Activated CD4-positive, alpha-beta T cell treated with anti-CD3 and anti-CD28 coated beads for 36 hours (primary cell): ENCODE measurements at regions of chr17 and their contacts with region 1.

Region 1: DNA sequence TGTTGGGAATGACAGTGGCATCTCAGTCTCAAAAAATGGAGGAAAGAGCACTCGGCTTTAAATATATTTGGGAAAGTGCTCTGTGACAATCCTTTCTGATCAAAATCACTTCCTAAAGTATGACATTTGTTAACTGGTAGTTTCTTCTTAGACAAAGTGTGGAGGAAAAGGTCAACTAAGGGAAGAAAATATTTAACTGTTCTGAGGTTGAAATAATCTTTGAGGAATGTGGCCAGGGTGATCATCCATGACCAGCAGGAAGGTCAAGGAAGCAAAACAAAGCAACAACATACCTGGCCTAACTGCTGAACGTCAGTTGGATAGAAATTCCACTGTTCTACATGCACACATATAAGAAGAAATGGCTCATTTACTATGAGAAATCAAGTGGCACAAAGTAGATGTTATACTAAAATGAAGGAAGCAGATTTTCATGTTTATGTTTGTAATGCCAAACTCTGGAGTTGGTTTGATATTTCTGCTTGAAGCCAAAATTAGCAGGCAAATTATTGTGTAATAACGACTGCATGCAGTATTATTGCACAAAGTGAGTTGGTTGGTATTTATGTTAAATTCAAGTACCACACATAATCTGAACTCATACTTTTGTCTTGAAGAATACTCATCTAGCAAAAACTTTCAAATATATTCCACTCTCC is 87.3 kb upstream of the CORO6 start:
- DNase-seq: no peak
- ATAC-seq: no peak
- H3K4me3 Mint-ChIP-seq: no peak overlapping the region
- H3K27ac Mint-ChIP-seq: no peak overlapping the region
- H3K4me1 Mint-ChIP-seq: peaks cover 69% of the 10 kb centered on the region
- H3K27me3 Mint-ChIP-seq: no peaks in the 10 kb centered on the region

Region 2: DNA sequence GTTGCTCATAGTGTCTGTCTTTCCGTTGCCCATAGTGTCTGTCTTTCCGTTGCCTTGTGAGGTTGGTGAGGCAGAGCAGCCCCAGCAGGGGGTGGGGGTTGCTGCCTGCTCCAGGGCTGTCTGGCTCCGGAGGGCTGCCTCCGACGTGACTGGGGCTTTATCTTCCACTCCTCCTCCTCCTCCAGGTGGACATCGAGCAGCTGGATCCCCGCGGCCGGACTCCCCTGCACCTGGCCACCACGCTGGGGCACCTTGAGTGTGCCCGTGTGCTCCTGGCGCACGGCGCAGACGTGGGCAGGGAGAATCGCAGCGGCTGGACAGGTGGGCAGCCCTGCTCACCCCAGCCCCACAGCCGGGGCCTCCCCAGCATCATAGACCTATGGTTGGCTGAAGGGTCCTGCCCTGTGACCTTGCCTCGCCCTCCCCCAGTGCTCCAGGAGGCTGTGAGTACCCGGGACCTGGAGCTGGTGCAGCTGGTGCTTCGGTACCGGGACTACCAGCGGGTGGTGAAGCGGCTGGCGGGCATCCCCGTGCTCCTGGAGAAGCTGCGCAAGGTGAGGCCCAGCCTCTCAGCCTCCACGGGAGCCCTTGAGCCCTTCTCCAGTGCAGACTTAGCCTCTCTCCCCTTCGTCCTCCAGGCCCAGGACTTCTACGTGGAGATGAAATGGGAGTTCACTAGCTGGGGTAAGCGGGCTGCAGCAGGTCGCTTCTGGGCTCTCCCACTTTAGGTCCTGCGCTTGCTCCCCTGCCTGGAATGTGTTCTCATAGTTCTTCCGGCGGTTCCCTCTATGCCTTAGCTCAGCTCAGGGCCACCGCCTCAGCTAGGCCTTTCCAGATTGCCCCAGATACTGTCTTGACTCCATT is 102.2 kb before region 1 on chr17:
- CTCF ChIA-PET with region 1: no interaction called
- POLR2A ChIA-PET with region 1: no interaction called
- intact Hi-C with region 1: no loop called
- DNase-seq: no peak
- ATAC-seq: no peak
- H3K4me3 Mint-ChIP-seq: no peak overlapping the region
- H3K27ac Mint-ChIP-seq: no peak overlapping the region
- H3K4me1 Mint-ChIP-seq: no peaks in the 10 kb centered on the region
- H3K27me3 Mint-ChIP-seq: no peaks in the 10 kb centered on the region

Region 3: GRCh38 chr17:29630630-29631193 is 79.3 kb before region 1 on chr17:
- CTCF ChIA-PET with region 1: no interaction called
- POLR2A ChIA-PET with region 1: no interaction called
- intact Hi-C with region 1: no loop called
- DNase-seq: no peak
- ATAC-seq: no peak
- H3K4me3 Mint-ChIP-seq: no peak overlapping the region
- H3K27ac Mint-ChIP-seq: no peak overlapping the region
- H3K4me1 Mint-ChIP-seq: peaks cover 37% of the 10 kb centered on the region
- H3K27me3 Mint-ChIP-seq: no peaks in the 10 kb centered on the region

Region 4: DNA sequence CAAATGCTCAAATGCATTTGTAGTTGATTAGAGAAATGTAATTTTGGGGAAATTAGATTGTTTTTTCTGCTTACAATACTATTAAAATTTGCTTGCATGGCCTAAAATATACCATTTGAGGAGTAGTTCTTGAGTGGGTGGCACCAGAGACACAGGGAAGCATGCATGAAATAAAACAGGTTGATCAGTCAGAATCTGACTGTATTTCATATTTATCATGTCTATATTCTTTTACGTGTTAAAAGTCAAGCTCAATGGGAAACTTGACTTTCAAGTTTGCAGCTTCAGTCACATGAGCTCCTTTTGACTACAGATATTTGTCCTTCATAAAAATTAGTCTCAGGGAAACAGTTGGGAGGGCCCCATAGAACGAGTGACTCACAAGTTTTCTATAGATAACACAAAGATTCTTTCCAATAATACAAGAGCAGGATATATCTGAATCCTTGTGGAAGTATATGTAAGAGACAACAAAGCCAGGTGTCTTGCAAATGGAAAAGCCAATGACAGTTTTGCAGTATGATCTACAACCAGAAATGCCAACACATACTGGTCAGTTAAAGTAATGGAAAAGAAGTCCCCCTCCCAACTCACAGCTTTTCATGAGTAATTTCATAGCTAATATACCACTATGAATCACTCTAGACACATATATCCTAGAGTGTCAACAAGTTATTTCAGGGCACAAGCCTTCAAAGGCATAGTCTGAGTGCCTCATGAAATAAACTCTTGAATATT is 45.1 kb before region 1 on chr17:
- CTCF ChIA-PET with region 1: interaction called, 6 read pairs
- POLR2A ChIA-PET with region 1: interaction called, 3 read pairs
- intact Hi-C with region 1: loop called (anchors 1 kb)
- DNase-seq: peak; percentile 18
- ATAC-seq: peak; percentile 94
- H3K4me3 Mint-ChIP-seq: no peak overlapping the region
- H3K27ac Mint-ChIP-seq: peak overlapping the region; percentile 85
- H3K4me1 Mint-ChIP-seq: peaks cover 32% of the 10 kb centered on the region
- H3K27me3 Mint-ChIP-seq: no peaks in the 10 kb centered on the region

Region 5: DNA sequence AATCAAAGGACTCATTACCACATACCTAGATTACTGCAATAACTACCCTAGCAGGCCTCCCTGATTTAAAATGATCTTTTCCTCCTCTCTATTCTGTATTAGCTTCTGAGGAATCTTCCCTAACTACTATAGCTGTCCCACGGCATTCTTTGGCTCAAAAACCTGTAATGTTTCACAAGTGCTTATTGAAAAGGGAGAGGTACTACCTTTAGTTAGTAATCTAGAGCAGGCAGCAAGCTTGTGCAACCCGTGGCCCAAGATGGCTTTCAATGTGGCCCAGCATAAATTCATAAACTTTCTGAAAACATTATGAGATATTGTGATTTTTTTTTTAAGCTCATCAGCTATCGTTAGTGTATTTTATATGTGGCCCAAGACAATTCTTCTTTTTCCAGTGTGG is 16.2 kb before region 1 on chr17:
- CTCF ChIA-PET with region 1: interaction called, 25 read pairs
- POLR2A ChIA-PET with region 1: interaction called, 8 read pairs
- intact Hi-C with region 1: loop called (anchors 1 kb)
- DNase-seq: no peak
- ATAC-seq: no peak
- H3K4me3 Mint-ChIP-seq: no peak overlapping the region
- H3K27ac Mint-ChIP-seq: peak overlapping the region; percentile 0
- H3K4me1 Mint-ChIP-seq: peaks cover 23% of the 10 kb centered on the region
- H3K27me3 Mint-ChIP-seq: no peaks in the 10 kb centered on the region

Region 6: DNA sequence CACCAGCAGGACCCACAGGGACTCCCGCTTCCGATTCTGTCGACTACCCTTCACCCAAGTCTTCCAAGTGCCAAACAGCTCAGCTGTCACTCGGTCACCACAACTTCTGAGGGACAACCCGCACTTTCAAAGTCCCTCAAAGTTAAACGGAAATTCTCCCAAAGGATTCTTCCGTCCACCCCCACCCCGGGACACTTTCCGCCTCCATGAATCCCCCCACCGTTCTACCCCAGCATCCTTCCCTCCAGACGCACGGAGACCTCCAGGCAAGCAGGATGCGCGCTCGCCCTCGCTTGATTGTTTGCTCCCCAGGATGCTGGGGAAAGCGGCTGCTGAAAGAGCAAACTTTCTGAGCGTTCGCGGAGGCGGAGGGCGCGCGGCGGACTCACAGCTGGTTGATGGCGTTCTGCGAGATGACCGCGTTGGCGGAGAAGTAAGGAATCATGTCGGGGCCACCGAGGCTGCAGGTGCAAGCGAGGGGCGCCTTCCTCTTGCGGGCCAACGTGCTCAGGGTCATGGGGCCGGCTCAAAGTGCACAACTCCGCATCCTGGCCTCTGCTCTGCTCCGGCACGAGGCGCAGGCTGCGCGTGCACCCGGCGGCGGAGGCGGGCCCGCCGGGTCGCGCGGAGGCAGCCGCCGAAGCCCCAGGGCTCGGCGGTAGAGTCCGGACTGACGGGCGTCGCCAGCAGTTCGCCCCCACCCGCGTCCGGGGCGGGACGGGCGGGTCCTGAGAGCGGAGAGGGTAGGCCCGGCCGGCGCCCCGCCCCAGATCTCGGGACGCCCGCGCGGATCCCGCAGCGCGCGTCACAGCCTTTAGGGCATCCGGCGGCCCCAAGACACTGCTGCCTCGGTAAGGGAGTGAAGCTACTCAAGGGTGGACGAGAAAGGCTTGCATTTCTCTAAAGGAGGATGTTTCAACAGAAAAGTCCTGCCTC is 51.0 kb after region 1 on chr17:
- CTCF ChIA-PET with region 1: interaction called, 7 read pairs
- POLR2A ChIA-PET with region 1: interaction called, 3 read pairs
- intact Hi-C with region 1: loop called (anchors 1 kb)
- DNase-seq: peak; percentile 97
- ATAC-seq: peak; percentile 89
- H3K4me3 Mint-ChIP-seq: peak overlapping the region; percentile 97
- H3K27ac Mint-ChIP-seq: peak overlapping the region; percentile 97
- H3K4me1 Mint-ChIP-seq: peaks cover 30% of the 10 kb centered on the region
- H3K27me3 Mint-ChIP-seq: no peaks in the 10 kb centered on the region